GM18951 (cell line): ENCODE measurements at regions of chr10 and their contacts with region 1.

Region 1: DNA sequence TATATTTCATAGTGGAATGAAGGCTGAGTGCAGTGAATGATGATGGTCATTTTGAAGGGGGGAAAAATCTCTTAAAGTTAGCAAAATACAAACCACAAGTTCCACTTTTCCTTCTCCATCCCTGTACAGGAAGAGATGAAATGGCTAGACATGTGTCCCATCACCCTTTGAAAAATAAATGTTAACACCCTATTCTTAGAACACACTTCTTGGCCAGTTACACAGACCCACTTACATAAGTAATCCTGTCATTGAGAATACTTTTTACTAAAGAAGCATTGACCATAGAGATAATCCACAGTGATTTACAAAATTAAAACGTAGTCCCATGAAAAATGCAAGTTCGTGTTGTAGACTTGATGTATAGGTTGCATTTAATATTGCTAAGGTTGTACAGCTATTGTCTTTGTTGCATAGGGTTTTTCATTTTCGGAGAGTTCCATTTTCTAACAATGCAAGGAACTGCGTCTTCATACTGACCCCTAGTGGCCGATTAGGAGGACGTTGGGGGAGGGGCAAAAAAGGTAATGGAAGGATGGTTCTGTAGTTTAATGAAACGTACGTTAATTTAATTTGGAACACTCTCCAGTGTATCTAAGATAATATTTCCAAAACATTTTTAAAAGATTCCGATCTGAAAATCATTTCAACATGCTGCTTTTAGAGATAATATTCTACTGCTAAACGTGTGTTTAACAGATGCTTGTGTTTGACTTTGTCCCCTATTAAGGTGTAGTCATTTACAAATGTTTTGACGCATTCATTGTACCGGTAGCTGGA is 60.9 kb downstream of the ARMC3 start:
- POLR2A ChIP-seq: no peak

Region 2: GRCh38 chr10:22005763-22006162 is 983.0 kb before region 1 on chr10:
- in situ Hi-C with region 1: loop called (anchors 5 kb)
- POLR2A ChIP-seq: no peak

Region 3: DNA sequence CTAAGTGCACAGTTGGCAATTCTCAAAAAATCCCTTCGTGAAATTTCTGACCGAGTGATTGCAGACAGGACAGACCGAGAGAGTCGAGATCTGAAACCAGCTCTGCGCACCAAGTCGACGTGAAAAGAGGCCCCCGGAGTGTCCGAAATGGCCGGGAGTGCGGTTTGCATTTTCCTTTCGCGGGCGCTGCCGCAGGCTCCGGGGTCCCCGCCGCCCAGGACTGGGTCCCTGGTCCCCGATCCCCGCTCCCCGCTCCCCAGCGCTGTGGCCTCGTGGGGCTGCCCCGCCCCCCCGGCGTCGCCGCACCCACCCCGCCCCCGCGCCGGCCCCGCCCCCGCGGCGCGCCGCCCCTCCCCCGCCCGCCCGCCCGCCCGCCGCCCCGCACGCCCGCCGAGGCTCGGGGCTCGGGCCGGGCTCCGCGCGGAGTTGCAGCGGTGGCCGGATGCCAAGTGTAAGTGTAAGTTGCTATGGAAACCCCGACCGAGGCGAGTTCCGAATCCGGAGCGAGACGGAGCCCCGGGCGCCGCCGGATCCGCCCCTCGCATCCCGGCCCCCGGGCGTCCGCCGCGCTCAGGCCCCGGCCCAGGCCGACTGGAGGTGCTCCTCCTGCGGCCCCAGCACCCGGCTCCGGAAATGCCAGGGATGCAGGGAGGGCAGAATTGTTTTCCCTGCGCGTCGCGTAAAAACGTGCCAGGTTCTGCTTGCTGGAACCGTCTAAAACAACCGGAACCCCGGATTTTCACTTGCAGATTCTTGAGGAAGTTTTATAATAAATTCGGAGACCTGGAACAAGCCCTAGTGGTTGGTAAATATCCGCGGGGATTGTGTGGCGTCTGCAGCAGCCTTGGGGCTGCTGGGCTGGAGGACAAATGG is 663.3 kb before region 1 on chr10:
- in situ Hi-C with region 1: no loop called
- POLR2A ChIP-seq: peak; percentile 24

Region 4: DNA sequence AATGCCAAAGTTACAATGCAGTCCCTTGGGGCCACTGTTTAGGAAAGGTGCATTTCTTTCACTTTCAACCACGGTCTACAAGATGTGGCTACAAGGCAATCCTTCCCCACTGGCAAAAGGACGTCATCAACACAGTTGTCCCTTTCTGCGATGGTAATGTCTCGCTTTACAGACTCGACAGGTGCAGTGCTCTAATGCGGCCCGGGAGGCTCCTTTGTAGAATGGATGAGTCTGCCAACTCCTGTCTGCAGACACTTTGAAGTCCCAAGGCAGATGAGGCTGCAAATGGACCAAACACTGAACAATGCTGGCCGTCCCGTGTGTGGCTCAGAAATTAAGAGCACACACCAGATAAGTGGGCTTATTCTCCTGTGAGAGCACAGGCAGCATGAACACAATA is 408.1 kb before region 1 on chr10:
- in situ Hi-C with region 1: loop called (anchors 10 kb)
- POLR2A ChIP-seq: no peak

Region 5: DNA sequence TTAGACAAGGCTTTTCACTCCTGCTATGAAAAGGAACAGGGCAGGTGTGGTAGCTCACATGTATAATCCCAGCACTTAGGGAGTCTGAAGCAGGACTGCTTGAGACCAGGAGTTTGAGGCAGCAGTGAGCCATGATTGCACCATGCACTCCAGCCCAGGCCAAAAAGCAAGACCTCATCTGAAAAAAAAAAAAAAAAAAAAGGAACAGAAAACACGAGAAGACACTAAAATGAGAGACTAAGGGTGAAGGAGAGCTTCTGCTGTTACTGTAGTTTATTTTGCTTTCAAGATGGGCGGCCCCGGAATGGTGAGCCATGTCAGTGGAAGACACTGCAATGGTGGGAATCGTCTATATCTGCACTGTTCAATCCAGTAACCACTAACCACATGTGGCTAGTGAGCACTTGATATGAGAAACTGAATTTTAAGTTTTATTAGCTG is 284.3 kb before region 1 on chr10:
- in situ Hi-C with region 1: loop called (anchors 10 kb)
- POLR2A ChIP-seq: no peak